GM12878 (cell line): ENCODE measurements at regions of chr14 and their contacts with region 1.

Region 1: DNA sequence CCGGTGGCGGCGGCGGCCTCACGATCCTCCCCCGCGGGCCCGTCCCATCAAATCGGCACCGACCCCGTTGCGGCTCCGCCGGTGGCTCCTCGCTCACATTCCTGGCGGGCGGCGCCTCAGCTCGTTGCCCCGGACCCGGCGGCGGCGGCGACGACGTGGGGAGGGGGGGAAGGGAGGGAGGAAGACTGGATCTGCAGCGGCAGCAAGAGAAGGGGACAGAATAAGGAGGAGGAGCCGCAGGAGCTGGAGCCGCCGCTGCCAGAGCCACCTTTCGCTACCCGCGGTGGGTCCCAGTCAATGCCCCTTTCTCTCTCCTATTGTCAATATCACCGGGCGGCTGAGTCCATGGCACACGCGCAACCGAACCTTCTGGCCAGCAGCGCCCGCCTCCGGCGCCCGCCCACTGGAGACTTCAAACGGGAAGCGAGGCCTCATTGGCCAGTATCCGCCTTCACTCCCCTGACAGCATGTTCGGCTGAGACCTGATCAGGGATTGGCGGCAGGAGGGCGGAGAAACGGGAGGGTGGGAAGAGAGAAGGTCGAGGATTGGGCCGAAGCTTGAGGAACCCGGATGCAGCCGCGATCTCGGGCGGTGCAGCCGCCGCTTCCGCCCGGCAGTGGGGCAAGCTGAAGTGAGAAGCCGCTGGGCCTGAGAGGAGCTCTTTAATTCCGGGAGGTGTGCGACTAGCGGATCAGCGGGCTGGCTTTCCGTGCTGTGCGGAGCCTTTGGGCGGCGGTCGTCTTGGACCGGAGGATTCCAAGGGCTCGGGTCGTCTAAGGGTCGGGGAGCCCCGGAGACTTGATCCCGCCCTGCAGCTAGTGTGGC is at the start of gene PPP2R5E:
- DNase-seq: peak; percentile 96
- ATAC-seq: peak; percentile 96
- H3K4me3 ChIP-seq: peak within 1 kb of the TSS; percentile 99
- H3K27ac ChIP-seq: peak within 1 kb of the TSS; percentile 77
- H3K4me1 ChIP-seq: no peaks in the 10 kb centered on the region
- H3K27me3 ChIP-seq: no peaks in the 10 kb centered on the region
- CTCF ChIP-seq: no peak
- EP300 ChIP-seq: no peak
- POLR2A ChIP-seq: peak; percentile 94
- RAD21 ChIP-seq: no peak
- polyA plus RNA-seq, gene PPP2R5E: 13.1 to 13.3 TPM

Region 2: DNA sequence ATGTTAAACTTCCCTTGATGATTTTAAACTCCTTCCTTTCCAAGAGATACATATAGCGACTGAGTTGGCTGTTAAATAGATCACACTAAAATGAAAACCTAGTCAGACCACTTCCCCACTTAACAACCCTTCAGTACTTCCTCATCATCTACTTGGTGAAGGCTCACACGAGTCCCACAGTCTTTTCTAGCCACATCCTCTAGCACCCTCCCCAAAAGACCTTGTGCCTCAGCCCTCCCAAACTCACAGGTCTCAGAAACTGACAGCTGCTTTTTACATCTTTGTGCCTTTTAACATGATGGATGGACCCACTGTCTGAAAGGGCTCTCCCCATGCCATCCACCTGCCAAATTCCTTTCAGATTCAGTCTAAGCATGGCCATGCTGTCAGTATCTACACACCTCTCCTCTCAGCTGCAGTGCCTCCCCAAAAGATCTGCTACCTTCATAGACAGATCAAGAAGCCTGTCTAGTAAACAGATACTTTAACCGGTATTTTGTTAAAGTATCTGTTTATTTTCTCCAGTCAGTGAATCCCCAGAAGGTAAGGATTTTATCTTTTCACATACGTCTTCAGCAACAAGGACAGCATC is 159.3 kb before region 1 on chr14:
- CTCF ChIA-PET with region 1: interaction called, 31 read pairs
- POLR2A ChIA-PET with region 1: no interaction called
- RAD21 ChIA-PET with region 1: interaction called, 64 read pairs
- SMC1A ChIA-PET with region 1: interaction called, 28 read pairs
- in situ Hi-C with region 1: no loop called
- intact Hi-C with region 1: loop called (anchors 2 kb)
- DNase-seq: peak; percentile 17
- ATAC-seq: peak; percentile 68
- H3K4me3 ChIP-seq: no peak overlapping the region
- H3K27ac ChIP-seq: peak overlapping the region; percentile 6; the same call in 1 of the 2 replicates
- H3K4me1 ChIP-seq: peaks cover 3% of the 10 kb centered on the region; the same call in 1 of the 2 replicates
- H3K27me3 ChIP-seq: no peaks in the 10 kb centered on the region
- CTCF ChIP-seq: no peak
- EP300 ChIP-seq: no peak
- POLR2A ChIP-seq: no peak
- RAD21 ChIP-seq: no peak

Region 3: DNA sequence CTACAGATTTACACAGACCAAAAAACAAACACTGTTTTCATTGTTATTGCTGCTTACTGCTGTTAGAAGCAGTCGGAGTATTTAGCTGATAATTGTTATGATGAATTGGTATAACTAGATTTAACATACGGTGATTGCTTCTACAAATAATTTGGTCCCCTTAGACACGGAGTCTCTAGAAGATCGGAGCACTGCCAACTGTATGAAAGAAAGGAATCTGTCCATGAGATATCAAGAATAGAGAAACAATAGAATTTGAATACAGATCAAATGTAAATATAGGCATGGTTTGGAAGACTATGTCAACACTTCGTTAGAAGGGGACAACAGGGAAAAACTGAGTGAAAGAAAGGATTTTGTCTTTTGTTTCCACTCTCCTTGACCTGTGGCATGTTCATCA is 111.0 kb before region 1 on chr14:
- CTCF ChIA-PET with region 1: interaction called, 21 read pairs
- POLR2A ChIA-PET with region 1: interaction called, 3 read pairs
- RAD21 ChIA-PET with region 1: no interaction called
- SMC1A ChIA-PET with region 1: interaction called, 12 read pairs
- in situ Hi-C with region 1: no loop called
- intact Hi-C with region 1: no loop called
- DNase-seq: no peak
- ATAC-seq: no peak
- H3K4me3 ChIP-seq: no peak overlapping the region
- H3K27ac ChIP-seq: no peak overlapping the region
- H3K4me1 ChIP-seq: peaks cover 8% of the 10 kb centered on the region
- H3K27me3 ChIP-seq: no peaks in the 10 kb centered on the region
- CTCF ChIP-seq: no peak
- EP300 ChIP-seq: no peak
- POLR2A ChIP-seq: no peak
- RAD21 ChIP-seq: no peak

Region 4: DNA sequence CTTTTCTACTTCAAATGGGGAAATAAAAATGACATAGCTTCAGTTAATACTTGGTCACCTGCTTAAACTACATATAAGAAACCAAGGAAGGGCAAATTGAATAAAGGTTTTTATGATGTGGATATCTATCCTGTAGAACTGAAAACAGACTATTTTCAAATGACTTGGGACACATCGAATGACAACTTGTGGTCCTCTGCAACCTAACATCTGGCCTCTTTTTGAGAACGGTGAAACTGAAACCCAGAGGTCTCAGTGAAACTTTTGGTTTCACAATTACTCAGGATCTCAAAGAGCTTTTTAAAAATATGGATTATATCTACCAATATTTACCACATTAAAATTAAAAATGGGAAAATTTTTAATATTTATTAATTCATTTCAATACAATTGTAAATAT is 65.2 kb before region 1 on chr14:
- CTCF ChIA-PET with region 1: interaction called, 3 read pairs
- POLR2A ChIA-PET with region 1: interaction called, 7 read pairs
- RAD21 ChIA-PET with region 1: interaction called, 24 read pairs
- SMC1A ChIA-PET with region 1: interaction called, 22 read pairs
- in situ Hi-C with region 1: no loop called
- intact Hi-C with region 1: loop called (anchors 5 kb)
- DNase-seq: peak; percentile 79
- ATAC-seq: peak; percentile 88
- H3K4me3 ChIP-seq: 0 out of 2 replicates have a peak overlapping the region, but pooled peaks have one; percentile 28
- H3K27ac ChIP-seq: peak overlapping the region; percentile 81
- H3K4me1 ChIP-seq: peaks cover 29% of the 10 kb centered on the region
- H3K27me3 ChIP-seq: no peaks in the 10 kb centered on the region
- CTCF ChIP-seq: no peak
- EP300 ChIP-seq: peak in 1 of 2 experiments; percentile 81; a peak in 2 of 4 replicates
- POLR2A ChIP-seq: no peak
- RAD21 ChIP-seq: no peak

Region 5: GRCh38 chr14:63555572-63555971 is 12.4 kb after region 1 on chr14:
- CTCF ChIA-PET with region 1: interaction called, 3 read pairs
- POLR2A ChIA-PET with region 1: interaction called, 6 read pairs
- RAD21 ChIA-PET with region 1: interaction called, 8 read pairs
- SMC1A ChIA-PET with region 1: interaction called, 12 read pairs
- in situ Hi-C with region 1: no loop called
- intact Hi-C with region 1: no loop called
- DNase-seq: no peak
- ATAC-seq: no peak
- H3K4me3 ChIP-seq: no peak overlapping the region
- H3K27ac ChIP-seq: no peak overlapping the region
- H3K4me1 ChIP-seq: no peaks in the 10 kb centered on the region
- H3K27me3 ChIP-seq: no peaks in the 10 kb centered on the region
- CTCF ChIP-seq: no peak
- EP300 ChIP-seq: no peak
- POLR2A ChIP-seq: no peak
- RAD21 ChIP-seq: no peak

Region 6: GRCh38 chr14:63701606-63702299 is 158.5 kb after region 1 on chr14:
- CTCF ChIA-PET with region 1: no interaction called
- POLR2A ChIA-PET with region 1: no interaction called
- RAD21 ChIA-PET with region 1: no interaction called
- SMC1A ChIA-PET with region 1: no interaction called
- in situ Hi-C with region 1: no loop called
- intact Hi-C with region 1: no loop called
- DNase-seq: no peak
- ATAC-seq: no peak
- H3K4me3 ChIP-seq: no peak overlapping the region
- H3K27ac ChIP-seq: no peak overlapping the region
- H3K4me1 ChIP-seq: peaks cover 24% of the 10 kb centered on the region
- H3K27me3 ChIP-seq: no peaks in the 10 kb centered on the region
- CTCF ChIP-seq: no peak
- EP300 ChIP-seq: no peak
- POLR2A ChIP-seq: no peak
- RAD21 ChIP-seq: no peak

Region 7: DNA sequence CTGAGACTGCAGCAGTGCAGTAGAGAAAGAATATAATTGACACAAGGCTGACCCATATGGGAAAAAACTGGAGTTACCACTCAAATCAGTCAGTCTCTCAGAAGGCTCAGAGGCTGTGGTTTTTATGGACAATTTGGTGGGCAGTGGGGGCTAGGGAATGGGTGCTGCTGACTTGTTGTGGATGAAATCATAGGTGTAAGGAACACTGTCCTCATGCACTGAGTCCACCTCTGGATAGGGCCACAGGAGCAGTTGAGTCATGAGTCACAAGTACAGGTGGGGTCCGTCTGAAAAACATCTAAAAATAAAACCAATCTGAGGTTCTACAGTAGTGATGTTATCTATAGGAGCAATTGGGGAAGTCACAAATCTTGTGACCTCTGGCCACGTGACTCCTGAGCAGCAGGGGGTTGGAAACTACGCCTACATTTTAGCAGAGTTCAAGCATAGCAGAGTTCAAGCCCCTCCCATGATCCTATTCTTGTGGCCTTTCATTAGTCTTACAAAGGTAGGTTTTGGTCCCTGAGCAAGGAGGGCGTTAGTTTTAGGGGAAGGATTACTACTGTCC is 202.7 kb after region 1 on chr14:
- CTCF ChIA-PET with region 1: no interaction called
- POLR2A ChIA-PET with region 1: no interaction called
- RAD21 ChIA-PET with region 1: interaction called, 4 read pairs
- SMC1A ChIA-PET with region 1: no interaction called
- in situ Hi-C with region 1: no loop called
- intact Hi-C with region 1: loop called (anchors 5 kb)
- DNase-seq: peak; percentile 80
- ATAC-seq: peak; percentile 76
- H3K4me3 ChIP-seq: no peak overlapping the region
- H3K27ac ChIP-seq: peak overlapping the region; percentile 75
- H3K4me1 ChIP-seq: peaks cover 36% of the 10 kb centered on the region
- H3K27me3 ChIP-seq: no peaks in the 10 kb centered on the region
- CTCF ChIP-seq: peak in 2 of 3 experiments; percentile 8 to 9; a peak in 1 of 6 replicates
- EP300 ChIP-seq: peak; percentile 38 to 65; a peak in 3 of 4 replicates
- POLR2A ChIP-seq: 0 out of 2 replicates have a peak, but pooled peaks have one; percentile 33
- RAD21 ChIP-seq: 0 out of 2 replicates have a peak, but pooled peaks have one; percentile 31